ENCODE measurements at regions of chr19 and their contacts with region 1.

Region 1: DNA sequence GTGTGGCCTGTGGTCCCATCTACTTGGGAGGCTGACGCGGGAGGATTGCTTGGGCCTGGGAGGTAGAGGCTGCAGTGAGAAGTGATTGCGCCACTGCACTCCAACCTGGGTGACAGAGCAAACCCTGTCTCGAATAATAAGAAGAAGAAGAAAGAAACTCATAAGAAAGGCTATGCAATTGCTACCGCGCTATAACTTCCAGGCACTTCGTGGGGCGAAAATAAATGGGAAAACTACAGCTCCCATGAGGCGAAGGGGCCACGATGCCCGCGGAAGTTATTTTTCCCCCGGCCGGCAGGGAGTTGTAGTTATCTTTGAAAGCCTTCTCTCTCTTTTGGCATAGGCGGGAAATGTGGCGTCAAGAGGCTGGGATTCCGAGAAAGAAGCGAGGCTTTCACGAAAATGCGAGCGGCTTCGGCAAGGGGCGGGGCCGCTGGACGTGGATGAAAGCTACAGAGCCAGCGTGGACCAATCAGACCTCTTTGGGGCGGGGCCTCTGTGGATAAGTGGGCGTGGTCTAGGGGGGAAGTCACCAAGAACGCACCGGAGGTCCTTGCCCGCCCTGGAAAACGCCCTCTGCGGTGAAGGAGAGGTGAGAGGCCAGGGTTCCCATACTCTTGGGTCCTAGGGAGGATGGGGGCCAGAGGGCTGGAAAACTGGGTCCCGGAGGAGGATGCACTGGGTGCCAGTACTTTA is at the start of gene NUCB1:
- DNase-seq: peak; percentile 98 to 100 (median 98)
- ATAC-seq: peak; percentile 87
- H3K4me3 ChIP-seq: peak within 1 kb of the TSS; percentile 89
- H3K27ac ChIP-seq: peak within 1 kb of the TSS; percentile 77
- H3K4me1 ChIP-seq: peaks cover 27 to 69% of the 10 kb centered on the region in 2 experiments
- H3K27me3 ChIP-seq: no peaks in the 10 kb centered on the region
- CTCF ChIP-seq: peak; percentile 16 to 52 (median 45); a peak in 3 of 6 replicates
- EP300 ChIP-seq: peak; percentile 73
- POLR2A ChIP-seq: peak; percentile 75
- RAD21 ChIP-seq: peak; percentile 26 to 42
- polyA plus RNA-seq, gene NUCB1: 3.1 to 5.3 TPM

Region 2: DNA sequence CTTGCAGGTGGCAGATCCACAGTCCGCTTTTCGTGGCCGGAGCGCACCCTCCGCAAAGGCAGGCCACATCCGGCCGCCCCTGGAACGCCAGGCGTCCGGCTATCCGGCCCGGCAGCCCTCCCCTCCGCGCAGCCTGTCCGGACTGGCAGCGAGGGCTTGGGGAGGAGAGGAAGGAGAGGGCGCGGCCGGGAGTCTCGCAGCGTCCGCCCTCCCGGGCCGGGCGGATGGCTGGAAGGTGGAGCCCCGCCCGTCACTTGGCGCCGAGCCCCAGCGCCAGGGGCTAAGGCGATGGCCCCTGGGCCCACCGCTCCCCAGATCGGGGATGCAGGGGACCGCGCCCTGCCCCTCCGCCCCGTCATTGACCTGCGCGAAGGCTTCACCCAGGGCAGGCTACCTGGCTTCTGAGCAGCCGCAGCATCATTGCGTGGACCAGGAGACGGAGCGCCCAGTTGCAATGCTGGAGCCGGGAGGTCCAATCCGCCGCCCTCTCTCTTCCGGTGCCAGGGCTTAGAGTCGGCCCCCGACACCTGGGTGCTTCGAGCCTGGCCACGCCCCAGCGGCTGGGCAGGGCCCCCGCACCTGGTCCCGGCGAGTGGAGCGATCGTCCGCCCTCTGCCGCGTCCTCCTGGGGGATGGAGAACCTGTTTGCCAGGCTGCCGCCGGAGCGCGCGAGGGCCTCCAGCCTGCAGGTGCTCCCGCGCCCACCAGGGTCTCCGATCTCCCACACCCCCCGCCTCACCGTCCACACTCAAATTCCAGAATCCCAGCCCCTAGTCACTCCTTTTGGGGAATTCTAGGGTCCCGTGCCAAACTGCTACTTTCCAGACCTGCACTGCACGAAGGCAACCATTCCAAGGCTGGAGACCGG is 147.2 kb before region 1 on chr19 and contains the start of gene FUT1:
- CTCF ChIA-PET with region 1: no interaction called
- POLR2A ChIA-PET with region 1: no interaction called
- in situ Hi-C with region 1: no loop called
- intact Hi-C with region 1: no loop called
- DNase-seq: peak; percentile 40 to 62 (median 60)
- ATAC-seq: peak; percentile 47
- H3K4me3 ChIP-seq: peak within 1 kb of the TSS; percentile 43
- H3K27ac ChIP-seq: peak within 1 kb of the TSS; percentile 93
- H3K4me1 ChIP-seq: peaks cover 35 to 81% of the 10 kb centered on the region in 2 experiments
- H3K27me3 ChIP-seq: no peaks in the 10 kb centered on the region
- CTCF ChIP-seq: no peak
- EP300 ChIP-seq: no peak
- POLR2A ChIP-seq: no peak
- RAD21 ChIP-seq: no peak
- polyA plus RNA-seq, gene FUT1: 2.3 to 3.1 TPM

Region 3: GRCh38 chr19:48881741-48882657 is 17.9 kb before region 1 on chr19:
- CTCF ChIA-PET with region 1: no interaction called
- POLR2A ChIA-PET with region 1: interaction called, 205 read pairs
- in situ Hi-C with region 1: no loop called
- intact Hi-C with region 1: no loop called
- DNase-seq: peak in 3 of 4 experiments; percentile 48 to 68 (median 57)
- ATAC-seq: peak; percentile 48
- H3K4me3 ChIP-seq: no peak overlapping the region
- H3K27ac ChIP-seq: no peak overlapping the region; the same call in 2 of the 3 replicates
- H3K4me1 ChIP-seq: peaks cover 25 to 42% of the 10 kb centered on the region in 2 experiments
- H3K27me3 ChIP-seq: no peaks in the 10 kb centered on the region
- CTCF ChIP-seq: no peak
- EP300 ChIP-seq: no peak
- POLR2A ChIP-seq: no peak
- RAD21 ChIP-seq: no peak

Region 4: GRCh38 chr19:48913114-48913889 is 13.4 kb after region 1 on chr19:
- CTCF ChIA-PET with region 1: no interaction called
- POLR2A ChIA-PET with region 1: interaction called, 18 read pairs
- in situ Hi-C with region 1: no loop called
- intact Hi-C with region 1: no loop called
- DNase-seq: peak in 1 of 4 experiments; percentile 59
- ATAC-seq: peak; percentile 83
- H3K4me3 ChIP-seq: no peak overlapping the region
- H3K27ac ChIP-seq: no peak overlapping the region
- H3K4me1 ChIP-seq: peaks cover 0 to 3% of the 10 kb centered on the region in 2 experiments; a peak in 1 of 5 replicates
- H3K27me3 ChIP-seq: no peaks in the 10 kb centered on the region
- CTCF ChIP-seq: no peak
- EP300 ChIP-seq: no peak
- POLR2A ChIP-seq: no peak; the same call in 1 of the 2 replicates
- RAD21 ChIP-seq: no peak

Measured in K562 (cell line).